Esophagus muscularis mucosa (tissue), 4 donors: ENCODE measurements at regions of chr15 and their contacts with region 1.

Region 1: DNA sequence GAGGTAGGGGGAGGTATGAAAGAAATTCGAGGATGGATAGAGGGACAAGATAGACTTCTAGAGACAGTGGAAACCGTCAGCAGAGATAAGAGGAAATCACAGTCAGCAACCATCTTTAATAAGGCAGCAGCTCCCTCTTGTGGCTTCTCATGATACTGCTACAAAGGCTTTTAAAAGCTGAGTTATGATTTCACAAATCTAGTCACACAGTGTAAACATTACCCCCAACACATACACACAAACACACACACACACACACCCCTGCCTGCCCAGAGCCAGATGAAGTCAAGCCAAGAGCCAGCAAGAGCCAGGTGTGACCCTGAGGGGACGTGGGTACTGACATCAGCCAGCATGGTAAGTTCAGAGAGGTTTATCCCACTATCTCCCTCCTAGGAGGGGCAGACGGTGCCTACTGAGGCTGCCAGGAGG is 18.9 kb upstream of the TGM5 start:
- DNase-seq: no peak
- H3K4me3 ChIP-seq: no peak overlapping the region
- H3K27ac ChIP-seq: no peak overlapping the region
- H3K4me1 ChIP-seq: peaks cover 0 to 3% (median 0%) of the 10 kb centered on the region in 4 donors
- H3K27me3 ChIP-seq: no peaks in the 10 kb centered on the region
- CTCF ChIP-seq: peak; percentile 76 to 90 (median 83)
- EP300 ChIP-seq: no peak
- POLR2A ChIP-seq: no peak

Region 2: GRCh38 chr15:43185157-43186017 is 100.2 kb before region 1 on chr15 and contains the start of gene CCNDBP1:
- intact Hi-C with region 1: loop called (anchors 5 kb)
- DNase-seq: peak; percentile 97
- H3K4me3 ChIP-seq: peak within 1 kb of the TSS; percentile 76 to 86 (median 82)
- H3K27ac ChIP-seq: peak within 1 kb of the TSS; percentile 82 to 94 (median 88)
- H3K4me1 ChIP-seq: peaks cover 37 to 66% (median 46%) of the 10 kb centered on the region in 4 donors
- H3K27me3 ChIP-seq: no peaks in the 10 kb centered on the region
- CTCF ChIP-seq: peak; percentile 26 to 32 (median 30)
- EP300 ChIP-seq: no peak
- POLR2A ChIP-seq: no peak
- total RNA-seq, gene CCNDBP1: 44.9 to 87.2 (median 69.6) TPM

Region 3: DNA sequence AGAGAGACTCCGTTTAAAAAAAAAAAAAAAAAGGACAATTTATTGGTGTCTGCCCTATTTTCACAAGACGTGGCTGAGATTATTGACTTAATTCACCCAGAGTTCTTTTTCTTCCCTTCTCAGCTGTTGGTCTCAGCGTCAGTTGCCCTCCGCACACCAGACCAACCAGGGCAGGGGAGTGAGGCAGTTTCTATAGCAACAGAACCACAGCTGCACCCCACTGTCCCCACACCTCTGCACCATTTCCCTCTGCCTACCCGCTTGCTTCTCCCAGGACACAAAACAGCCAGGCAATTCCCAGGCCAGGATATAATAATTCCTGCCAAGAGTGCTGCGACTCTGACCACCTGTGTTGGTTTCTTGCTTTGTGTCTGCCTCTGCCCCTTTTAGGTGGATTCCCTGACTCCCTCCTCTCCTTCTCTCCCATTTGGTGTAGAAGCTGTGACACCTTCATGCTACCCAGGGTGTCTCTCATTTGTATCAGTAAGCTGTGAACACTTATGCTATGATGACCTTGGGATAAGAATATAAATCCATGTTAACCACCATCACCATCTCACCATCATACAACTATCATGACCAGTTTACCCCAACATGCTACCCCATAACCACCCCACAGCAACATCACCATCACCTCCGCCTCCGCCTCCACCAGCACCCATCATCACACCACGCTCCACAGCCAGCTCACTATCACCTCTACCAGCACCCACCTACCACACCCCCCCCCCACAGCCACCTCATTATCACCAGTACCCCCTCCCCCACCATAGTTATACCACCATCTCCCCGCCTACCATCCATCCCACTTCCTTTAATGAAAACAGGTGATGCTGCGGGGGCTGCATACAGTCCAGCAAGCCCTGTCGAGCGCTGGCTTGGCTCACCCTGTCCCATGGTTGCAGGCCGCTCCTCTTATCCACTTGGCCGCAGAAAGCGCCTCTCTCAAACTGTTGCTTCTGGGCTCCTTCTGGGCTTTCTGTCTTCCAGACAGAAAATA is 65.4 kb before region 1 on chr15:
- intact Hi-C with region 1: loop called (anchors 5 kb)
- DNase-seq: no peak
- H3K4me3 ChIP-seq: no peak overlapping the region
- H3K27ac ChIP-seq: no peak overlapping the region
- H3K4me1 ChIP-seq: no peaks in the 10 kb centered on the region
- H3K27me3 ChIP-seq: peaks cover 0 to 14% (median 0%) of the 10 kb centered on the region in 4 donors
- CTCF ChIP-seq: no peak
- EP300 ChIP-seq: no peak
- POLR2A ChIP-seq: no peak